ENCODE measurements at regions of chrX and their contacts with region 1.

Region 1: DNA sequence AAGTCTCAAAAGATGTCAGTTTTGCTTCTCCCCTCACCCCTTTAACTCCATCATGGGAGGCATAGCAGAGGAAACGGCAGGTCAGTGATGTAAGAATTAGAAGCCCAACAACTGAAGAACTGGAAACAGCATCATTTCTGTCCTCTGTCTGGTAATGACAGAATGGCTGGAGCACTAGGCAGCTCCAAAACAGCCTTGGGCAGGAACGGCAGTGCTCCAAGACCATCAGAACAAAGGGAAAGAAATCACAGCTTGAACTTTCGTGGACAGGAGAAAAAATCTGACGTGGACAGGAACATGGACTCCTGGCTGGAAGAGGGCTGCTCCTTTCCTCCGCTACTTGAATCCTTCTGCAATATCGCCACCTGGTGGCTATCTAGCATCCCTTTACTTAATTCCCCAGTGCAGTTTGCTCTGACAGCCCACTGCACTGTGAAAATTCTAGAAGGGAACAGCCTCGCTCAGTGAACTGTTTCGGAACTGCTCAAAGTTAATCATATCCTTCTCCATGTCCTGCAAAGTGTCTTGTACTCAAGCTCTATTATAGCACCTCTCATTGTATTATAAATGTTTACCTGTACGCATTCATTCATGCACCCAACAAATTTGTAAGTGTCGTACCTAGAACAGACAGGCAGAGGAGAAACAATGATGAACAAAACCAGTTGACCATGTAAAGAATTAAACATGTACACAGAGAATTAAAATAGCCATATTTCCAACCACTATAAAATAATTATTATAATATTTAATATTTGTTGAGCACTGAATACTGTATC is 20.4 kb downstream of the SLC25A53 start:
- DNase-seq: peak in 7 of 10 donors; percentile 49 to 91 (median 69)

Region 2: DNA sequence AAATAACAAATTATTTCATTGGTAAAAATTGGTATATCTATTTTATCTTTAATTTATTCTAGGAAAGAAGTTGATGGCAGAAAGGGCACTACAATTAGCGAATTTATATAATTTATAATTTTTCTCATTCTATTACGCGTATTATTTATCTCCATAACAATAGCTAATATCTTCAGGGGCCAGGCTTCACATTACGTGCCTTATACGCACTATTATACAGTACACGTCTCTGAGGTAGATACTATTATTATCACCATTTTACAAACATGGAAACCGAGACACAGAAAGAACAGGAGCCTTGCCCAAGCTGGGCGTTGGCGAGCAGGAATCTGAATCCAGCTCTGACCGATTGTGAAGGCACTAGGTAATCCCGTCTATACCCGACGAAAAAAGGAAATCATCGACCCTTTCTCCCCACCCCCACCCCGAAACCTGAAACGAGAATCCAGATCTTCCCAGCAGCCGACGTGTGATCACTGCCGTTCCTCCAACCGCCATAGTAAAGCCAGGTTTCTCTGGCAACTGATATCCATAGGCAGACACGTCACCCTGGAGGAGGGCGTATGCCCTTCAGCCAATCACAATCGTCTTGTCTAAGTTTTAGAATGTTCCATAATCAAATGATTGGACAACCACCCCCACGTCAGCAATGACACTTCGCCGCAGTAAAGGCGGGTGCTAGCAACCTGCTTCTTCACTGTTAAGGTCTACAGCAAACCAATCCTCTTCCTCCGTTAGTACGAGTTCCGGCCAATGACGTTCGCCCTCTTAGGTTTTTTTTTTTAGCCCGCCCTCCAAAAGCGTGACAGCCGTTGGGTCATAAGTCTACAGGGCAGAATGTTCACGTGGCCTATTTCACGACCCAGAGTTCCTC is 450.0 kb before region 1 on chrX and contains the start of gene MORF4L2:
- intact Hi-C with region 1: no loop called
- DNase-seq: peak; percentile 68 to 98 (median 79)

Region 3: DNA sequence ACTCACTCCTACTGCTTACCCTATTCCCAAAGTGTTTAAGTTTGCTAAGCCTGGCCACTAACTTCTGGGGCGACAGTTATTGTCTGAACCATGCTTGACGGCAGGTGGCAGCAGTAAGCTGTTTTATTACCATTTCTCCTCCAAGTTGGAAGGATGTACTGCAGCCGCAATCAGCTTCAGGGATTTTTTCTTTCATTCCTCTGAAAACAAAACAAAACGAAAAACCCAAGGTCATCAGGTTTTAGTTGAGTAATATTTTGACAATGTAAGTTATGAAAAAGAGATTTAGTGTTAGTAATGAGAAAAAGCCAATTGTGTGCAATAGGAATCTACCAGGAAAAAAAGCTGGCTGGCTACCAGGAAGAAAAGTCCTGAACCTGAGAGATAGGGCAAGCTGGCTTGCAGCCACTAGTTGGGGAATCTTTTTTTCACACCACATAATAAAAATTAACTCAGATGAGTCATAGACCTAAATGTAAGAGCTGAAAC is 291.2 kb before region 1 on chrX:
- intact Hi-C with region 1: loop called (anchors 10 kb)
- DNase-seq: peak in 8 of 10 donors; percentile 31 to 83 (median 54)

Region 4: DNA sequence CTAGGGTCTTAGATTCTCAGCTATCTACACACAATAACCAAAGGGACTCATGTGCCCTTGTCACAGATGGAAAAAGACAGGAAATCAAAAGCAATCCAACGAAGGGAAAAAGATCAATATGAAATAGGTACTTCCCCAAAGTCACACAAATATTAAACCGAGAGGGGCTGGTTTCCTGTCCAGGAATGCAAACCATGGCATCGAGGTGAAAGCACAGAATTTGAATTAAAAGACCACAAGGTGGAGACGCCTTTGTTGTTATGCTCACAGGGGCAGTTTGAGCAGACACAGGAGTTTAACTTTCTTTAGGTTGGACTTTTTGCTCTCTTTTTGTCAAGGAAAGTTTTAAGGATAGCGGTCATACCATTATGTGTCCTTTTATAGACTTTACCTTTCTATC is 137.2 kb before region 1 on chrX:
- intact Hi-C with region 1: no loop called
- DNase-seq: no peak

Region 5: DNA sequence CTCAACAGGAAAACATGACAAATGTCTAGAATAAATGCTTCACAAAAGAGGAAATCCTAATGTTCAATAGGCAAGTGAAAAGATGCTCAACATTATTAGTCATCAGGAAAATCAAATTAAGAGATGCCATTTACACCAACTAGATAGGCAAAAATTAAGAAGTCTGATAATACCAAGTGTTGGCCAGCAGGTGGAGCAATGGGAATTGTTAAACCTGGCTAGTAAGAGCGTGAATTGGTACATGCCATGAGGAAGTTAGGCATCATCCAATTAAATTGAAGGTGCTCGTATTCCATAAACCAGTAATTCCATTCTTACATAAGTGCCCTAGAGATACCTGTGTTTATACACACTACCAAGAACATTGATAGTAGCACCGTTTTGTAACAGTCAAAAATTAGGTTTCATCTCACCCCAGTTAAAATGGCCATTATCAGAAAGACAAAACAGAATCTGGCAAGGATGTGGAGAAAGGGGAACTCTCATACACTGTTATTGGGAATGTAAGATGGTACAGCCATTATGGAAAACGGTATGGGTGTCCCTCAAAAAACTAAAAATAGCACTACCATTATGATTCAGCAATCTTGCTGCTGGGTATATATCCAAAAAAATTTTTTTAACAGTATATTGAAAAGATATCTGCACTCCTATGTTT is 38.1 kb before region 1 on chrX:
- intact Hi-C with region 1: loop called (anchors 1 kb)
- DNase-seq: peak in 3 of 10 donors; percentile 21 to 50 (median 23)